CD4-positive, alpha-beta memory T cell (primary cell): ENCODE measurements at regions of chr17 and their contacts with region 1.

Region 1: DNA sequence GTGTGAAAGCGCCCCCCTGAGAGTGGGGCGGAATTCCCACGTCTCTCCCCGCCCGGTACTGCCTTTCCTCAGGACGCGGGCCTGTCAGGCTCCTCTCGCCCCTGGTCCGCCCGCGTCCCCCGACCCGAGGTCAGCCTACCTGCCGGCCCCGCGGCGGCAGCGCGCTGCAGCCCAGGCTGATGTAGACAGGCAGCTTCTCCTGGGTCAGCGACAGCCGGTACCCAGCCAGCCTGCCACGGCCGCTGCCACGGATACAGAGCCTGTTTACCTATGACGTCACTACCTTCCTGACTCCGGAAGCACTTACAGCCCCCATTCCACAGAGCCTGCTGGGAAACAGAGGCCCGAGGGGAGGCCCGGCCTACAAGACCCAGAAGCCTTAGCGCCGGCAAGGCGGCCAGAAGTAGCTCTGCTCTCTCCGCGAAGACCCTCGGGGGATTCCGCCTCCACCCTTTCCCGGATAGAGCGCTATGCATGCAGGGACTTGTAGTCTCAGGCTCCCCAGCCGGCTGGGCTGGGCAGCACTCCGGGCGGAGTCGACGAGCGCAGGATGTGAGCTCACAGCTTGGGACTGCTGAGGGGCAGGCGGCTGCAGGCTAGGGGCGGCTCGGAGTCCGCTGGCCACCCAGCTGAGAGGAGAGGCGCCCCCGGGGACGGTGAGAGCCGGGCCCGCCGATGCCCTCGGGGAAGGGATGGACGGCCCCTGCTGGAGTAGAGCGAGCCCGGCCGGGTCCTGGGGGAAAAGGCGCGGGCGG is at the starts of genes IFT20 and TNFAIP1:
- DNase-seq: peak; percentile 96 to 100 (median 99)
- H3K4me3 ChIP-seq: peak within 1 kb of the TSS; percentile 86 to 95
- H3K4me3 Mint-ChIP-seq: peak within 1 kb of the TSS; percentile 95 to 98 (median 97)
- H3K27ac ChIP-seq: peak within 1 kb of the TSS; percentile 93
- H3K27ac Mint-ChIP-seq: peak within 1 kb of the TSS; percentile 97 to 98 (median 97)
- H3K4me1 ChIP-seq: peaks cover 30% of the 10 kb centered on the region
- H3K4me1 Mint-ChIP-seq: peaks cover 29 to 66% (median 42%) of the 10 kb centered on the region in 4 donors
- H3K27me3 ChIP-seq: no peaks in the 10 kb centered on the region
- H3K27me3 Mint-ChIP-seq: no peaks in the 10 kb centered on the region
- total RNA-seq, gene IFT20: 42.9 to 43.6 TPM
- total RNA-seq, gene TNFAIP1: 26.2 to 32.1 TPM

Region 2: DNA sequence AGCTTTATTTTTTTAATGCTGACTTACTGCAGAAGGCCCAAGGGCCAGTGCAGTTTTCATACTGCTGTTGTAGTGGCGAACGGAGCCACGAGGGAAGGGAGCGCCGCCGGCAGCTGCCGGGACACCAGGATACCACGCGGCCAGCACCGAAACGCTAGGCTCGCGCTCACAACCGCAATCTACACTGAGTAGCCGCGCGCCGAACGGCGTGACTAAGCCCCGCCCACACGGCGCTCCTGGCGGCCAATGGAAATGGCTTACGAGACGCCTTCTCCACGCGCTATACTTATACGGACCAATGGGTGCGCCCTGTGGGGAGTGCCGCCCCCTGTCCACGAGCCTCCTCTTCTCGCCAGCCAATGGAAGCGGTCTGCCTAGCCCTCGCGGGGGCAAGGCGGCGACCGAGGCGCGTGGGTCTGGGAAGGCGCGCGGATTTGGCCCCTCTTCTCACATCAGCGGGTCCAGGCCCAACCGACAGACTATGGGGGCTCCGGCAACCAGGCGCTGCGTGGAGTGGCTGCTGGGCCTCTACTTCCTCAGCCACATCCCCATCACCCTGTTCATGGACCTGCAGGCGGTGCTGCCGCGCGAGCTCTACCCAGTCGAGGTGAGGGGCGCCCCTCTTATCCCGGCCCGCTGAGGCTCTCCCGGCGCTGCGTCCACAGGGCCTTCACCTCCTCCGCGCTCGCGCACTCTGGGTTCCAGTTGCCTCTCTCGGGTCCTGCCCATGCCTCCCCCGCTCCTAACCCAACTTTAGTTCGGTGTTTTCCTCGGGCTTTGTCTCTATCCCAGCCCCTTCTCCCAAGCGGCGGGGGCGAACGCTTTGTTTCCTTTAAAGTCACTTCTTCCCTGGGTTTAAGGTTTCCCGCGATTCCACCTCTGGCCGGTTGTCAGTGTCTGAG is 16.4 kb before region 1 on chr17 and contains the start of gene TMEM97:
- CTCF ChIA-PET with region 1: interaction called, 9 read pairs
- POLR2A ChIA-PET with region 1: interaction called, 39 read pairs
- intact Hi-C with region 1: loop called (anchors 1 kb)
- DNase-seq: peak; percentile 93 to 96 (median 95)
- H3K4me3 ChIP-seq: peak within 1 kb of the TSS; percentile 58 to 69
- H3K4me3 Mint-ChIP-seq: peak within 1 kb of the TSS; percentile 87 to 95 (median 91)
- H3K27ac ChIP-seq: peak within 1 kb of the TSS; percentile 45
- H3K27ac Mint-ChIP-seq: peak within 1 kb of the TSS; percentile 69 to 90 (median 86)
- H3K4me1 ChIP-seq: peaks cover 19% of the 10 kb centered on the region
- H3K4me1 Mint-ChIP-seq: peaks cover 15 to 32% (median 21%) of the 10 kb centered on the region in 4 donors
- H3K27me3 ChIP-seq: no peaks in the 10 kb centered on the region
- H3K27me3 Mint-ChIP-seq: no peaks in the 10 kb centered on the region
- total RNA-seq, gene TMEM97: 2.4 to 2.6 TPM

Region 3: DNA sequence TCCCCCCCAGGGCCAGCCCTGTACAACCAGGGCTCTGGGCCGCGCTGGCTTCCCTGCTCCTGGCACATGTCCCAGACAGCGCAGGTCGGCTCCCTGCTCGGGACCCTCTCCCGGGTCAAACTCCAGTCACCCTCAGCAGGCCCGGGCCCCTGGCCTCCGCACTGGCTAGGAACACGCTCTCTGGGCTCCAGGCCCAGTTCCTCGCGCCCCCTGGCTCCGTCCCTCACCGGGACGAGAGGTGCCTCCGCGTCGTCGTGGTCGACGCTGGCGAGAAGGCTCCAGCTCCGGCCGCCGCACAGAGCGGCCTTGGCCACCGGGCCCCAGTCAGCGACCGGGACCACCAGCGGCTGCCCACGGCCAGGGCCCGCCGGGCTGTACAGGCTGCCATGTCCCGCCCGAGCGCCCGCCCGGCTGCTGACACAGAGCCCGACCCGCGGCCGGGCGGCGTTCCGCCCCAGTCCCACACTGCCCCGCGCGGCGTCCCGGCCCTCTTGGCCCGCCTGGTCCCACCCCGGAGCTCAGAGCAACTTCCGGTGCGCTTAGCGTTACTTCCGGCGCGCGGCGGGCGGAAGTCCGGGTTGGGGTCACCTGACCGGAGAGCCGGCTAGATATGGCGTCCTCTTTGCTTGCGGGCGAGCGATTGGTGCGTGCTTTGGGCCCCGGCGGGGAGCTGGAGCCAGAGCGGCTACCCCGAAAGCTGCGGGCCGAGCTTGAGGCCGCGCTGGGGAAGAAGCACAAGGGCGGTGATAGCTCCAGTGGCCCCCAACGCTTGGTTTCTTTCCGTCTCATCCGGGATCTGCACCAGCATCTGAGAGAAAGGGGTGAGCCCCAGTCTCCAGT is 21.9 kb after region 1 on chr17 and contains the start of gene POLDIP2:
- CTCF ChIA-PET with region 1: interaction called, 17 read pairs
- POLR2A ChIA-PET with region 1: interaction called, 130 read pairs
- intact Hi-C with region 1: loop called (anchors 1 kb)
- DNase-seq: peak; percentile 95 to 96 (median 96)
- H3K4me3 ChIP-seq: peak within 1 kb of the TSS; percentile 67 to 90
- H3K4me3 Mint-ChIP-seq: peak within 1 kb of the TSS; percentile 92 to 98 (median 95)
- H3K27ac ChIP-seq: peak within 1 kb of the TSS; percentile 85
- H3K27ac Mint-ChIP-seq: peak within 1 kb of the TSS; percentile 93 to 97 (median 96)
- H3K4me1 ChIP-seq: peaks cover 24% of the 10 kb centered on the region
- H3K4me1 Mint-ChIP-seq: peaks cover 18 to 36% (median 26%) of the 10 kb centered on the region in 4 donors
- H3K27me3 ChIP-seq: no peaks in the 10 kb centered on the region
- H3K27me3 Mint-ChIP-seq: no peaks in the 10 kb centered on the region
- total RNA-seq, gene POLDIP2: 27.8 to 28.7 TPM

Region 4: GRCh38 chr17:28384281-28385036 is 49.1 kb after region 1 on chr17:
- CTCF ChIA-PET with region 1: no interaction called
- POLR2A ChIA-PET with region 1: interaction called, 20 read pairs
- intact Hi-C with region 1: no loop called
- DNase-seq: peak; percentile 50 to 71 (median 58)
- H3K4me3 ChIP-seq: peak overlapping the region; percentile 86 to 91
- H3K4me3 Mint-ChIP-seq: peak overlapping the region; percentile 92 to 97 (median 95)
- H3K27ac ChIP-seq: peak overlapping the region; percentile 50
- H3K27ac Mint-ChIP-seq: peak overlapping the region; percentile 59 to 94 (median 90)
- H3K4me1 ChIP-seq: peaks cover 22% of the 10 kb centered on the region
- H3K4me1 Mint-ChIP-seq: peaks cover 15 to 32% (median 29%) of the 10 kb centered on the region in 4 donors
- H3K27me3 ChIP-seq: no peaks in the 10 kb centered on the region
- H3K27me3 Mint-ChIP-seq: peaks cover 0 to 2% of the 10 kb centered on the region in 2 donors

Region 5: GRCh38 chr17:28473542-28473941 is 138.2 kb after region 1 on chr17 and contains the start of gene SLC13A2:
- CTCF ChIA-PET with region 1: no interaction called
- POLR2A ChIA-PET with region 1: no interaction called
- intact Hi-C with region 1: no loop called
- DNase-seq: no peak
- H3K4me3 ChIP-seq: no peak within 1 kb of the TSS
- H3K4me3 Mint-ChIP-seq: no peak within 1 kb of the TSS
- H3K27ac ChIP-seq: no peak within 1 kb of the TSS
- H3K27ac Mint-ChIP-seq: peak within 1 kb of the TSS in 3 of 7 donors; percentile 27 to 60 (median 30)
- H3K4me1 ChIP-seq: peaks cover 6% of the 10 kb centered on the region
- H3K4me1 Mint-ChIP-seq: peaks cover 6 to 12% (median 11%) of the 10 kb centered on the region in 4 donors
- H3K27me3 ChIP-seq: no peaks in the 10 kb centered on the region
- H3K27me3 Mint-ChIP-seq: no peaks in the 10 kb centered on the region
- total RNA-seq, gene SLC13A2: not detected

Region 6: DNA sequence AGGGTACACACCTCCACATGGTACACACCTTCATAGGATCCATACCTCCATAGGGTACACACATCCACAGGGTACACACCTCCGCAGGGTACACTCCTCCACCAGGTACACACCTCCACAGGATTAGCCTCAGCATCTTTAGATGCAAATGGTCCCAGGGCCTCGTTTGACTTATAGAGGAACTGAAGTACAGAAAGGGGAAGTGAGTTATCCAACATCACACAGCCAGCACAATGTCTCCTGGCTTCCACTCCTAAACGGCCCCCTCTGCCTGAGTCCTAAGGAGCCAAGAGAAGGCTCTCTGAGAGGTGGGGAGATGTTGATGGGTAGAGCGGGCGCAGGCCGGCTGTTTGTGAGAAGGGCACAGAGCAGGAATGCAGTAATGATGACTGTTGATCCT is 182.8 kb after region 1 on chr17:
- CTCF ChIA-PET with region 1: no interaction called
- POLR2A ChIA-PET with region 1: no interaction called
- intact Hi-C with region 1: no loop called
- DNase-seq: no peak
- H3K4me3 ChIP-seq: no peak overlapping the region
- H3K4me3 Mint-ChIP-seq: no peak overlapping the region
- H3K27ac ChIP-seq: no peak overlapping the region
- H3K27ac Mint-ChIP-seq: no peak overlapping the region
- H3K4me1 ChIP-seq: no peaks in the 10 kb centered on the region
- H3K4me1 Mint-ChIP-seq: no peaks in the 10 kb centered on the region
- H3K27me3 ChIP-seq: no peaks in the 10 kb centered on the region
- H3K27me3 Mint-ChIP-seq: peaks cover 4 to 7% of the 10 kb centered on the region in 2 donors

Region 7: GRCh38 chr17:28812091-28812747 is 476.8 kb after region 1 on chr17:
- CTCF ChIA-PET with region 1: no interaction called
- POLR2A ChIA-PET with region 1: no interaction called
- intact Hi-C with region 1: no loop called
- DNase-seq: peak; percentile 94 to 97 (median 95)
- H3K4me3 ChIP-seq: peak overlapping the region; percentile 75 to 84
- H3K4me3 Mint-ChIP-seq: peak overlapping the region; percentile 90 to 98 (median 93)
- H3K27ac ChIP-seq: peak overlapping the region; percentile 90
- H3K27ac Mint-ChIP-seq: peak overlapping the region; percentile 94 to 100 (median 98)
- H3K4me1 ChIP-seq: peaks cover 44% of the 10 kb centered on the region
- H3K4me1 Mint-ChIP-seq: peaks cover 19 to 47% (median 37%) of the 10 kb centered on the region in 4 donors
- H3K27me3 ChIP-seq: no peaks in the 10 kb centered on the region
- H3K27me3 Mint-ChIP-seq: no peaks in the 10 kb centered on the region